Colonic mucosa (tissue), 4 donors: ENCODE measurements at regions of chr11 and their contacts with region 1.

Region 1: DNA sequence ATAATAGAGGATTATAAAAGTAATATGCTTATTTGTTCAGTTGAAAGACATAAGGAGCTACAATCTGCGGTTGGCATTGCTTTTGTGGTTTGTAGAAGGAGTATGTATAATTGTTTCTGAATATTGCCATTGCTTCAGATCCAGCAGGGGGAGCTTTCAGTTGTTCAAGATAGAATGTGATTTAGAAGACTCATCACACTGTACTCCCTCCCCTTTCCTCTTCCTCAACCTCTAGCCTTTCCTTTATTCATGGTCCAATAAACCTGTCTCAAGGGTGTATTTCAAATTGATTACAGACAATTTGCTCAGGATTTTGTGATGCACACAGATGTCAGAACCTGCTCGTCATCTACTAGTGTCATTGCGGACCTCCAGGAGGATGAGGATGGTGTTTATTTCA is 9.8 kb downstream of the PRMT3 start:
- DNase-seq: no peak
- H3K4me3 ChIP-seq: no peak overlapping the region
- H3K27ac ChIP-seq: no peak overlapping the region
- H3K4me1 ChIP-seq: no peaks in the 10 kb centered on the region
- H3K27me3 ChIP-seq: no peaks in the 10 kb centered on the region
- CTCF ChIP-seq: peak; percentile 37

Region 2: GRCh38 chr11:20289732-20290131 is 107.5 kb before region 1 on chr11:
- intact Hi-C with region 1: no loop called
- DNase-seq: no peak
- H3K4me3 ChIP-seq: no peak overlapping the region
- H3K27ac ChIP-seq: no peak overlapping the region
- H3K4me1 ChIP-seq: no peaks in the 10 kb centered on the region
- H3K27me3 ChIP-seq: no peaks in the 10 kb centered on the region
- CTCF ChIP-seq: no peak

Region 3: DNA sequence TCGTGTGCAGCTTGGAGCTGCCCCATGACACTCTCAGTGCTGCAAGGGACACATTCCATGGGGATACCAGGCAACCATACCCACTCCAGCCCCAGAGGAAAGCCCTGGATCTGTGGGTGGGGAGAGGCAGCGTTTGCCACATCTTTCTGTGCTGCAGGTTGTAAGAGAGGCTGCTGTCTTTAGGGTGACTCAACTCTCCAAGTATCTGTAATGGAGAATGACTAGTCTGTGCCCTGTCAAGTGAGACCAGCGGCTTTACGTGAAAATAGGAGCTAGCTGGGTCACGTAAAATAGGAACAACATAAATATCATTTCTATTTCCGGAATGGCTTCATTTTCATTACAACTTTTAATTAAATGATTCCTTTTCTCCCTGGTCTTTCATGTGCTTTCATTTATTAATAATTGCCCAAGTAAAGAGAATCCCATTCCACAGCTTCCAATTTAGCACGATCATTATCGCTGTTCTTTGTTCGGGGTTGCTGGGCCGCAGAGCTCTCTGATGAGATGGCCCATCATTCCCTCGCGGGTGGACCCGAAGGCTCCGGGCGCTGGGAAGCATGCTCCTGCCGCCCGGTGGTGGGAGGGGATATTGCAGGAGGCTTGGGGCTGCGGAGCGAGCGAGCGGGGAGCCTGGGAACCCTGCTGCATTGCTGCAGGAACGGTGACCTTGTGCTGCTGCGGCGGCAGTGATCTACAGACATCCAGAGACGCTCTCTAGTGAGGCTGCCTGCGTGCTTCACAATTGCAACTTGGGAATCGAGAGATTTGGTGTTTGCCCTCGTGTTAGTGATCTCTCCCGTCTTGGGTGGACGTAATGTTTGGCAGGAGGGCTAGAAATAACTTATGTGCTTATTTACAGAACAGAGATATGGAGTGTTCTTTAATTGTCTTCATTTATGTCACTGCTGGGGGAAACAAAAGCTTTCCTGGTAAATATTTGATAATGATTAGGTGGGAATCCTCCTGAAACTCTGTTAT is 212.7 kb after region 1 on chr11:
- intact Hi-C with region 1: loop called (anchors 5 kb)
- DNase-seq: peak; percentile 63
- H3K4me3 ChIP-seq: no peak overlapping the region
- H3K27ac ChIP-seq: no peak overlapping the region
- H3K4me1 ChIP-seq: no peaks in the 10 kb centered on the region
- H3K27me3 ChIP-seq: peaks cover 15% of the 10 kb centered on the region
- CTCF ChIP-seq: peak; percentile 92

Region 4: GRCh38 chr11:20647976-20648565 is 250.8 kb after region 1 on chr11:
- intact Hi-C with region 1: no loop called
- DNase-seq: peak; percentile 56
- H3K4me3 ChIP-seq: no peak overlapping the region
- H3K27ac ChIP-seq: no peak overlapping the region
- H3K4me1 ChIP-seq: no peaks in the 10 kb centered on the region
- H3K27me3 ChIP-seq: no peaks in the 10 kb centered on the region
- CTCF ChIP-seq: peak; percentile 89